BJ (cell line): ENCODE measurements at regions of chr1 and their contacts with region 1.

Region 1: DNA sequence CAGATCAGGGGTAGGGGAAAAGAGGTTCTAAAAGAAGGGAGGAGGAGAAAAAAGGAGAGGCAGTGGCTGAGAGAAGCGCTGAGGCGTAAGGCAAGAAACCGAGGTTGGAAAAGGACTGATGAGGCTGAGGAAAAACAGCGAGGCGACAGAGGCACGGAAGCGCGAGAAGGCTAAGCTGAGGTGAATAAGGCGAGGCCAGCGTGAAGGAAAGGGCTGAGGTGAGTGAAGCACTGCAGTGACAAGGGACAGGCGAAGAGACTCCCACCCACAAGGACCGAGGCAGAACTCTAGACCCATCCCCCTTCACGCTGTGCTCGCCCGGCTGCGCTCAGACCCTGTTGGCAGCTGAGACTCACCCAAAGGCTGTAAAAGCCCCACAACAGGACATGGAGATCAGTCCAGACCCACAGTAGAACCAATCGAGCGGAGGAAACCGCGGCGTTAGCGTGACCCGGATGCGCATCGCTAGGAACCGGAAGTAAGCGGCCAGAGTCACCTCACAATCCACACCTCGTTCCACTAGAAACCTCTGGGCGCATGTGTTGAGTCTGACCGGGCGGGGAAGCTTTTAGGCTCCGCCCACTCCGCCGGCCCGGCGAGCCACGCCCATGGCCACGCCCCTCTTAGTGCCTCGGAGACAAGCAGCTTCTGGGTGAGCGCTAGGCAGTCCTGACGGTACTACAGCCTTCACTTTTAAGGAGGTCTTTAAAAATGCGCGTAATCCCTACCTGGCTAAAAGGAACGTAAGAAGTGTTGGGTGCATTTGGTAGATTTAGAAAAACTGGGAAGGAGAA is at the start of gene EYA3:
- DNase-seq: peak; percentile 93
- H3K4me3 ChIP-seq: peak within 1 kb of the TSS; percentile 77
- H3K27me3 ChIP-seq: no peaks in the 10 kb centered on the region
- CTCF ChIP-seq: no peak
- polyA plus RNA-seq, gene EYA3: 8.6 and 11.1 TPM in 2 replicates

Region 2: GRCh38 chr1:27741121-27741520 is 347.2 kb before region 1 on chr1:
- CTCF ChIA-PET with region 1: no interaction called
- POLR2A ChIA-PET with region 1: no interaction called
- DNase-seq: no peak
- H3K4me3 ChIP-seq: no peak overlapping the region
- H3K27me3 ChIP-seq: no peaks in the 10 kb centered on the region
- CTCF ChIP-seq: no peak

Region 3: DNA sequence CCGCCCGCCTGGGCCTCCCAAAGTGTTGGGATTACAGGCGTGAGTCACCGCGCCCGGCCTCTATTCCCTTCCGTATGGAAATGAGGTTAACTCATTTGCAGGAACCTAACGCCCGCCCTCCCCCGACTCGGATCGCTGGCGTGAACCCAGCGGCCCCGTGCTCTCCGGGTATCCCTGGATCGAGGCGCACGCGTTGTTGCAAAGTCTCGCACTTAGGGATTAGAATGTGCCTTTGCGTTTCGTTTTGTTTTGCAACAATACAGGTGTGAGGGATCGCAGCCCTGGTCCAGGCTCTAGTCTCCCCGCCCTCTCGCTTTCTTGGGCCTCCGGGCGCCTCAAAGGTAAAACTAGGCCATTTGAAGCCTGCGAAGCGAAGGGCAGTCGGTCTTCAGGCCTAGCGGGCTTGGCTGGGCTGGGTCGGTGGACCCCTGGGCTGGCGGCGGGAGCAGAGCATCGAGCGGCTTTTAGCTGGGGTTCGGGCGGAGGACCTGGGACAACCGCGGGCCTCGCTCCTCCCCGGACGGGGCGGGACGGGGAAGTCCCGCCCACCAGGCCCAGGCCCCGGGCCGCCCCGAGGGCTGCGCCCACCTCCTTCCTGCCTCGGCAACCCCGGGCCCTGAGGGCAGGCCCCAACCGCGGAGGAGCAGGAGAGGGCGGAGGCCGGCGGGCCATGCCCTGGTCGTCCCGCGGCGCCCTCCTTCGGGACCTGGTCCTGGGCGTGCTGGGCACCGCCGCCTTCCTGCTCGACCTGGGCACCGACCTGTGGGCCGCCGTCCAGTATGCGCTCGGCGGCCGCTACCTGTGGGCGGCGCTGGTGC is 128.8 kb before region 1 on chr1 and contains the start of gene XKR8:
- CTCF ChIA-PET with region 1: no interaction called
- POLR2A ChIA-PET with region 1: no interaction called
- DNase-seq: no peak
- H3K4me3 ChIP-seq: peak within 1 kb of the TSS; percentile 66
- H3K27me3 ChIP-seq: peaks cover 2% of the 10 kb centered on the region; the same call in 1 of the 2 replicates
- CTCF ChIP-seq: peak; percentile 46; the same call in 1 of the 2 replicates
- polyA plus RNA-seq, gene XKR8: 8.6 and 13.2 TPM in 2 replicates

Region 4: GRCh38 chr1:28031173-28031572 is 57.2 kb before region 1 on chr1:
- CTCF ChIA-PET with region 1: no interaction called
- POLR2A ChIA-PET with region 1: no interaction called
- DNase-seq: no peak
- H3K4me3 ChIP-seq: no peak overlapping the region
- H3K27me3 ChIP-seq: no peaks in the 10 kb centered on the region
- CTCF ChIP-seq: no peak

Region 5: GRCh38 chr1:28104866-28105467 is 16.6 kb after region 1 on chr1:
- CTCF ChIA-PET with region 1: interaction called, 12 read pairs
- POLR2A ChIA-PET with region 1: no interaction called
- DNase-seq: no peak
- H3K4me3 ChIP-seq: peak overlapping the region; percentile 23
- H3K27me3 ChIP-seq: no peaks in the 10 kb centered on the region
- CTCF ChIP-seq: no peak

Region 6: DNA sequence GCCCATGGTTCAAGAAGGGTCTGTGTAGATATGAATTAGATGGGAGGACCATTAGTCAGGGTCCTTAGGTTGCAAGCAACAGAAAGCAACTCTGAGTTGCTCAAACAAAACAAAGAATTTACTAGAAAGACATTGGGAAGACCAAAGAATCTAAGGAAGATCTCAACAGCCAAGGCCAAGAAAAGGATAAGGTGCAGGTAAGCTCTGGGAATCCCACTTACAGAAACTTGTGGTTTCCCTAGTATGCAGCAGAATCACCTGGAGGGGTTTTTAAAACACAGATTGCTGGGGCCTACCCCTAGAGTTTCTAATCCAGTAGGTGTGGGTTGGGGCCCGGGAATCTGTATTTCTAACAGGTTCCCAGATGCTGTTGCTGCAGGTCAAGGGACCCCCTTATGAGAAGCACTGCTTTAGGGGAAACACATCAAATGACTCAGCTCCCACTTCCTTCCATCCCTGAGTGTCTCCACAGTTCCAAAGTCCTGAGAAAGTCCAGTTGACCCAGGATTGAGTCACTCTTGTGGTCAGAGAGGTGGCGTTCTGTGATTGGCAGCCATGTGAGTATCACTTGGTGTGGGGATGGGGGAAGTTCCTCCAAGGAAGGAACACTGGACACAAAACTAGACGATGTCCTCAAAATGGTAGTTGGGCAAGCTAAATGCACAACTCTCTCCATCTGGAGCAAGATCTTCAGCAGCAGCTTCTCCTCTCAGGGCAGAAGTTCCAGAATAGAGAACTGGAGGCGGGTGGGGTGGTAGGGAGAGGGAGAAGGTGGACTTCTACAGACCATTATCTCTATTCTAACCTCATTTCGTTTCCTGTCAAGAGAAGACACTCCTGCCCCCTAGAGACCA is 24.2 kb after region 1 on chr1:
- CTCF ChIA-PET with region 1: interaction called, 11 read pairs
- POLR2A ChIA-PET with region 1: no interaction called
- DNase-seq: no peak
- H3K4me3 ChIP-seq: no peak overlapping the region
- H3K27me3 ChIP-seq: no peaks in the 10 kb centered on the region
- CTCF ChIP-seq: 0 out of 2 replicates have a peak, but pooled peaks have one; percentile 29

Region 7: GRCh38 chr1:28208818-28209441 is 120.6 kb after region 1 on chr1:
- CTCF ChIA-PET with region 1: interaction called, 134 read pairs
- POLR2A ChIA-PET with region 1: no interaction called
- DNase-seq: peak; percentile 6
- H3K4me3 ChIP-seq: no peak overlapping the region
- H3K27me3 ChIP-seq: no peaks in the 10 kb centered on the region
- CTCF ChIP-seq: peak; percentile 81